PC-9 (cell line): ENCODE measurements at regions of chr12 and their contacts with region 1.

Region 1: GRCh38 chr12:25386831-25387731 is 136.4 kb upstream of the KRAS start:
- DNase-seq: peak; percentile 68 to 83
- H3K4me3 ChIP-seq: peak overlapping the region; percentile 65
- H3K27ac ChIP-seq: no peak overlapping the region
- H3K4me1 ChIP-seq: 0 out of 2 replicates have a peak, but pooled peaks cover 6% of the 10 kb centered on the region
- H3K27me3 ChIP-seq: no peaks in the 10 kb centered on the region
- CTCF ChIP-seq: peak; percentile 91

Region 2: GRCh38 chr12:25151476-25151875 is 235.6 kb before region 1 on chr12:
- CTCF ChIA-PET with region 1: no interaction called
- POLR2A ChIA-PET with region 1: no interaction called
- intact Hi-C with region 1: loop called (anchors 1 kb)
- DNase-seq: no peak
- H3K4me3 ChIP-seq: no peak overlapping the region
- H3K27ac ChIP-seq: no peak overlapping the region
- H3K4me1 ChIP-seq: no peaks in the 10 kb centered on the region
- H3K27me3 ChIP-seq: no peaks in the 10 kb centered on the region
- CTCF ChIP-seq: no peak

Region 3: DNA sequence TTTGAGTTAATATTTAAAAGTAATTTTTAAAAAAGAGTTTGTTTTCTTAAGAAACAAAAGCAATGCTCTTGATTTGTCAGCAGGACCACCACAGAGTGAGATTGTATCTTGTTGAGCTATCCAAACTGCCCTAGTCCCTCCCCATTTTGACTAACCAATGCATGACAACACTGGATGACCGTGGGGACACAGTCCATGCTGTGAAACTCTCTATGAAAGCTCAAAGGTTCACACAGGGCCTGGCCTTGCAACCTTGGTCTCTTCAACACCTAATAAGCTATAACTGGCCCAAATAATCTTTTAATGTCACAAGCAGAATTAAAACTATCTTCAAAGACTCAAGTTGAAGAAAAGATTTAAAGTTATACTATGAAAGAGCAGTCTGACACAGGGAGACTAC is 178.5 kb before region 1 on chr12:
- CTCF ChIA-PET with region 1: interaction called, 4 read pairs
- POLR2A ChIA-PET with region 1: interaction called, 6 read pairs
- intact Hi-C with region 1: loop called (anchors 1 kb)
- DNase-seq: no peak
- H3K4me3 ChIP-seq: no peak overlapping the region
- H3K27ac ChIP-seq: no peak overlapping the region
- H3K4me1 ChIP-seq: no peaks in the 10 kb centered on the region
- H3K27me3 ChIP-seq: no peaks in the 10 kb centered on the region
- CTCF ChIP-seq: no peak

Region 4: DNA sequence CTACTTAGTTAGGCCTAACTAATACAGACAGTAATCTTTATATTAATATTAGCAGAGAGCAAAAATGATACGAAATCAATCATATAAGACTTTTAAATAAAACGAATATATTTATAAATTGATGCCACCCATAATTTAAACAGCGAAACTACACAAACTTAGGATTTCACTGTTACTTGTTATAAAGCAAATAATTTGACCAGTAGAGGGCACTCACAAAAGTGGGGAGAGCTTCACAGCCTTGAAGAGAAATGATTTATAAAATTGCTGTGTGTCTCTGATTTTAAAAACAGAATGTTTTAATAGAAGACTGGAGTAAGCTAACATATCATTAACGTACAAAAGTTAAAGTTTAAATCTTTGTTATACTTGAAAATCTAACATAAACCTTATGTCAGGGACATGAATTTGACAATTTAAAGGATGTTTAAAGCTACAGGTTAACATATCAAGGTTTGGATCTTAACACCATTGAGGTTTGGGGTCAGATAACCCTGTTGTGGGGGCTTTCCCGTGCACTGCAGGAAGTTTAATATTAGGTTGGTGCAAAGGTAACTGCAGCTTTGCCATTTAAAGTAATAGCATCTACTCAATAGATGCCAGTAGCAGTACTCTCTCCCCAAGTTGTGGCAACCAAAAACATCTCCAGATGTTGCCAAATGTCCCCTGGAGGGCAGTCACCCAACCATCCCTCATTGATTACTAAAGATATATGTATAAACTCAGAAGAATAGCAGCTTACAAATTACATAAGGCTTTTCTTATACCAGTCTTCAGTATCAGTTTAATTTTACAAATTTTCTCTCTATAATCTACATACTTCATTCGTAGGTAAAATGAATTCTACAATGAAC is 145.7 kb before region 1 on chr12:
- CTCF ChIA-PET with region 1: interaction called, 9 read pairs
- POLR2A ChIA-PET with region 1: interaction called, 5 read pairs
- intact Hi-C with region 1: loop called (anchors 1 kb)
- DNase-seq: no peak
- H3K4me3 ChIP-seq: no peak overlapping the region
- H3K27ac ChIP-seq: no peak overlapping the region
- H3K4me1 ChIP-seq: no peaks in the 10 kb centered on the region
- H3K27me3 ChIP-seq: no peaks in the 10 kb centered on the region
- CTCF ChIP-seq: peak; percentile 80